ENCODE measurements at regions of chr13 and their contacts with region 1.

Region 1: DNA sequence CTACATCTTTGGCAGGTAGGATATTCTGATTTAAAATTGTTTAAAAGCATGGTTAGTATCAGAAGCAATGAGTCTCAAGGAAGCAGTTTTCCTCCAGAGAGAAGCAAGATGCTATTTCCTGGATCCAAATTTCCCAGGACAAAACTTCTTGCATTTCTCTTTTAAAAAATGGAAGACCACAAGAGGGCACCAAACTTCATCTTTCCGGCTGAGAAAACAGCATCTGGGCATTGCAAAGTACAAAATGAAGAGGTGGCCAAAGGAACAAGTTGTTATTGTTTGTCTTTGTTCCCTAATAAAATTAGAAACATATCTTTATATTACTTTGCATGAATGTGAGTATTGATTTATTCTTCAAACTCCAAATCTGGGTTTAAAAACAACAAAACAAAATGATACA is 60.0 kb upstream of the LRCH1 start:
- DNase-seq: no peak
- H3K4me3 ChIP-seq: no peak overlapping the region
- H3K27ac ChIP-seq: no peak overlapping the region
- H3K4me1 ChIP-seq: no peaks in the 10 kb centered on the region
- H3K27me3 ChIP-seq: no peaks in the 10 kb centered on the region
- CTCF ChIP-seq: peak; percentile 31 to 59 (median 43)
- POLR2A ChIP-seq: no peak

Region 2: DNA sequence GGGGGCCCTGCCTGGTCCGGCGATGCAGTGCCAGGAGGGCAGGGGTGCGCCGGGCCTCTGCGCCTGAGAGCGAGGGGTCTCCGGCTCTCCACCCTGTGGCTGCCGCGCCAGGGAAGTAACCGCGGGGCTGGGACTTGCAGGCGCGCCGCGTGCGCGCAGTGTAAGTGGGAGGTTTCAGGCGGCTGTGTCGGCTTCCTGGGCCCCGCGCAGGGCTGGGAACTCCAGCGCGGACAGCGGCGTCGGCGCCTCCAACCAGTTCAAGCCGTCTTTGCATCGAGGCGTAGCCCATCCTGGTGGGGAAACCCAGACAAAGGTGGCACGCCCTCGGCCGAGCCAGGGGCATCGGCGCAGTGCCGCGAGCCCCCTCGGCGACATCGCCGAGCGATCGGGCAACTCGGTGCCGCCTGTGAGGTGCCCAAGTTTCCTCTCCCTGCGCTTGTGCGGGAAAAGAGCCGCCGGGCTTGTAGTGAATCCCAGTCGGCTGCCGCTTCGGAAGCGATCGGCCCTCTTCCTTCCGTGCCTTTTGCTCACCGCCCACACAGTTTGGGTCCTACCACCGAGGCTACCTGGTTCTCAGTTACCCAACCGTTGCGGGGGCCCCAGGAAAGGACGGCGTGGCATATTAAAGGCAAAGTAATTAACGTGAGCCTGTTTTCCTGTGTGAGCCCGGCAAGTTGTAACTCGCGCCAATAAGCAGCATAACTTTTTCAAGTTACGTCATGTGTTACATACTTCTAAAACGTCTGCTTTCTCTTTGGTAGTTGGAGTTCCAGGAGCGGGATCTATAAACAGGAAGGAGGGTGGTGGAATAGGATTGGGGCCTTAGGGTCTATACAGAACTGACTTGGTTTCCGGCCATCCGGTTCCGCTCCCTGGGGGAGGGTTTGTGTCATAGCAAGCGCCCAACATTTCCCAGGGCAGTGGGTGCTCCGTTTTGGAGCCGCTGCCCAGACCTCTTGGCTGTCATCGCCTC is 61.2 kb after region 1 on chr13:
- intact Hi-C with region 1: loop called (anchors 10 kb)
- DNase-seq: no peak
- H3K4me3 ChIP-seq: peak overlapping the region; percentile 74 to 99
- H3K27ac ChIP-seq: peak overlapping the region; percentile 97
- H3K4me1 ChIP-seq: peaks cover 32% of the 10 kb centered on the region
- H3K27me3 ChIP-seq: no peaks in the 10 kb centered on the region
- CTCF ChIP-seq: peak in 1 of 3 experiments; percentile 25
- POLR2A ChIP-seq: no peak

Region 3: DNA sequence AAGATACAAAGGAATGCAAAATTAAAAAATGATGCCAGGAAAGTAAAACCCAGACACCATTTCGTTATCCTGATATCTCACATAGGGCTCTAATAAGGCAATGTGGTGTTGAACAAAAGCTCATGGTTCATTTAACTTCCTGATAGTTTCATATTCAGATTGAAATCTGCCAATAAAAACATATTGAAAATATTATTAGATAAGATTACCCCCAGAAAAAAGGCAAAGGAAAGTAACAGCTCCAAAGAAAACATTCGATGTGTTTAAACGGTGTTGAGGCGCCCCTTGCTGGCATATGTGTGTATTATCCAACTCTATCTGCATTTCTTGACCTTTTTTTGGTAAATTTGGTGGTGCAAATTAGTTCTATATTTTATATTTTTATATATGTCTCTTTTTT is 228.1 kb after region 1 on chr13:
- intact Hi-C with region 1: loop called (anchors 5 kb)
- DNase-seq: no peak
- H3K4me3 ChIP-seq: no peak overlapping the region
- H3K27ac ChIP-seq: peak overlapping the region; percentile 18
- H3K4me1 ChIP-seq: no peaks in the 10 kb centered on the region
- H3K27me3 ChIP-seq: no peaks in the 10 kb centered on the region
- CTCF ChIP-seq: peak; percentile 53 to 84 (median 83)
- POLR2A ChIP-seq: no peak

Measured in vagina (tissue), 2 donors.